ENCODE measurements at regions of chr2 and their contacts with region 1.

Region 1: GRCh38 chr2:201130524-201131186 is 14.7 kb downstream of the CFLAR start:
- DNase-seq: peak; percentile 50
- H3K4me3 Mint-ChIP-seq: peak overlapping the region; percentile 83
- H3K27ac Mint-ChIP-seq: peak overlapping the region; percentile 90
- H3K4me1 Mint-ChIP-seq: peaks cover 79% of the 10 kb centered on the region
- H3K27me3 Mint-ChIP-seq: no peaks in the 10 kb centered on the region

Region 2: GRCh38 chr2:201071479-201072200 is 59.0 kb before region 1 on chr2 and contains the starts of genes HYCC2 and NDUFB3:
- CTCF ChIA-PET with region 1: interaction called, 4 read pairs
- POLR2A ChIA-PET with region 1: interaction called, 27 read pairs
- DNase-seq: peak; percentile 95
- H3K4me3 Mint-ChIP-seq: peak within 1 kb of the TSS; percentile 96
- H3K27ac Mint-ChIP-seq: peak within 1 kb of the TSS; percentile 88
- H3K4me1 Mint-ChIP-seq: peaks cover 57% of the 10 kb centered on the region
- H3K27me3 Mint-ChIP-seq: no peaks in the 10 kb centered on the region
- total RNA-seq, gene HYCC2: 27.9 to 31.9 TPM
- total RNA-seq, gene NDUFB3: 133 to 135 TPM

Region 3: DNA sequence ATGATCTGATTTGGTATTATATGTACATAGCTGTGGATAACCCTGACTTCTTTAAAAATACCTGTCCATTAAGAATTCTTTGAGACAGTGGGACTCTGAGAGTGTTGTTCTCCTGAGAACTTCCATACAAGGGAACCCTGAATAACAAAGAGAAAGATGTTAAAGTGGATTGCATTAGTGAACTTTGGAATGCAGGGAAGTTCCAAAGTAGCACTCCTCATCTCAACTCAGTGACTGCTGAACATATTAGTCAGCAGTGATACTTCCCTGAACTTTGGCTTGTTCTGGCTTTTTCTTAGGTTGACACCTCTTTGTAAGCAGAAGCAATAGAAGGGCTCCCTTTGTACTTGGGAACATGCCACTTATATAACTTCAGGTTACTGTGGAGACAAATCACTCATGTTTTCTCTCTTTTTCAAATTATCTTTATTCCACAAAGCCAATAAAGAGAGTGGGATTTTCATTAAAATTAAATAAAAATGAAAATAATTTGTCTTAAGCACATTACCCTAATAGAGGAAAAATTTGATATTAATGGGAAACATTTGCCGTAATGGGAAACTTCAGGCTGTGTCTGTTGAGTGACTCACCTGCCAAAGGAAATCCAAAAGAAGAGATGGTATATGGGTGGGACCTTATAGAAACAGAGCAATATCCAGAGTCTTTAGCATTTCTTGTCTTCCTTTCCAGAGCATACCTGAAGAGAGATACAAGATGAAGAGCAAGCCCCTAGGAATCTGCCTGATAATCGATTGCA is 18.6 kb after region 1 on chr2:
- CTCF ChIA-PET with region 1: interaction called, 10 read pairs
- POLR2A ChIA-PET with region 1: interaction called, 12 read pairs
- DNase-seq: no peak
- H3K4me3 Mint-ChIP-seq: no peak overlapping the region
- H3K27ac Mint-ChIP-seq: peak overlapping the region; percentile 38
- H3K4me1 Mint-ChIP-seq: peaks cover 31% of the 10 kb centered on the region
- H3K27me3 Mint-ChIP-seq: no peaks in the 10 kb centered on the region

Region 4: GRCh38 chr2:201158111-201158929 is 27.7 kb after region 1 on chr2:
- CTCF ChIA-PET with region 1: interaction called, 15 read pairs
- POLR2A ChIA-PET with region 1: interaction called, 7 read pairs
- DNase-seq: peak; percentile 63
- H3K4me3 Mint-ChIP-seq: no peak overlapping the region
- H3K27ac Mint-ChIP-seq: peak overlapping the region; percentile 50
- H3K4me1 Mint-ChIP-seq: peaks cover 15% of the 10 kb centered on the region
- H3K27me3 Mint-ChIP-seq: no peaks in the 10 kb centered on the region

Measured in activated CD4-positive, alpha-beta memory T cell treated with anti-CD3 and anti-CD28 coated beads, Interleukin-2, amount 10 ng/mL, durations not matched to agents 7 days and 5 days (primary cell).